GM10248 (cell line): ENCODE measurements at regions of chr2 and their contacts with region 1.

Region 1: DNA sequence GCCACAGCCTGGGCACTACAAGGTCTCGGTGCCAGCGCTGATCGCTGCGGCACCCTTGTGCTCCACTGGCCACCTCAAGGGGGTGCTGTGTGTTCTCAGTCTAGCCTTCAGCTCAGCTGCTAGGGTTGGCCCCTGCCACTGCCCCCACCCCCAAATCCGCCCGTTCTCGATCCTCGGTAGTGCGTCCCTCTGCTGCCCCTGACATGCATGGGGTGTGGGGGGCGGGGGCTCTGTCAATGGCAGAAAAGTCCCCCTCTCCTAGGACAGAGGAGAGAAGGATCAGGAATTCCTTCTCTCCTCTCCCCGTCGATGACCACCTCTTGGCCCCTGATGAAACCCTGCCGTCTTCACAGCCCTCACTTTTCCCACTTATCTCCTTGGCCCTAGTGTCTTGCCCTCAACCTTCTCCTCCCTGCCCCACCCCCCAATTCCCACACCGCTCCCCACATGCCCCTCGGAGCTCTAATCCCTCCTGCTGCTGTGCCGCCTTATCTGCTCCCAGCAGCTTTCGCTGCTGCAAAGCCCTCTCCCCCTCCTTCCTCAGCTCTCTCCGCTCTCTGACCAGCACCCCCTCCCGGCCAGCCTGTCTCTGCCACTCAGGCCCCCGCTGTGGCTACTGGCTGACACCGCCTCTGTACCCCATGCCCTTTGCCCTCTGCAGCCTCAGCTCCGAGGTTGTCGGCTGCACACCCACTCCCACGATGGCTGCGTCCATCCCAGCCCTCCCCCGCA is 4.3 kb upstream of the ASIC4 start:
- DNase-seq: peak; percentile 70
- CTCF ChIP-seq: peak; percentile 81

Region 2: DNA sequence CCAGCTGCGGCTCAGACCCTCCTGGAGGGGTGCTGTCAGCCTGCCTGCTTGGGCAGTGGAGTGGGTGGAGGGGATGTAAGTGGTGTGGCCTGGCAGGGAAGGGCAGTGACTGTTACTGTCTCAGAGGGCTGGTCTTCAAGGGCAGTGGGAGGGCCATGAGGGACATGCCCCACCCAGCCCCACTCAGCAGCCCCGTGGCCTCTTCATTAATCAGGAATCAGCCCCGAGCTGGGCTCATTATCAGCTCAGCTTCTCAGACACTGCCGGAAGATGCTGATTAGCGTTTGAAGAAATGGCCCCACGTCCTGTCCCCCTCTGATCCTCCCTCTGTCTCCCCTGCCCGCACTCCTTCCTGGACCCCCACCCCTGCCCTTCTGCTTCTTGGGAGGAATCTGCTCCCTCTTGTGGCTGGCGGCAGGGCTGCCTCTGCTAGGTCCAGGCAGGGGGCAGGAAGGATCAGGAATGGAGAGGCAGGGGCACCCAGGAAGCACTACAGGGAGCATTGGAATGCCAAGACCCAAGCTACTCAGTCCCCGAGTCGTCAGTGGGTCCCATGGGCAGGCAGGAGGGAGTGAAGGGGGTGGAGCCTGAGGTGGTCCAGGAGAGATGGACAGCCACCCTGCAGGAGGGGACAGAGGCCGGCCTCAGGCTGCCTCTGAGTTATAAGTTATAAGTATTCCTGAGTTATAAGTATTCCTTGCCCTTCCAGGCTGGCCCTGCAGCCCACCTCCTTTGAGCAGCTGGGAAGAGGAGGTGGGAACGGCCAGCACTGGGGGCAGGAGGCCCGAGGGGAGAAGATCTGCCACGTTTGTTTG is 11.3 kb after region 1 on chr2:
- CTCF ChIA-PET with region 1: interaction called, 80 read pairs
- POLR2A ChIA-PET with region 1: no interaction called
- DNase-seq: no peak
- CTCF ChIP-seq: peak; percentile 28

Region 3: GRCh38 chr2:220209751-220210150 is 699.8 kb after region 1 on chr2:
- CTCF ChIA-PET with region 1: no interaction called
- POLR2A ChIA-PET with region 1: no interaction called
- DNase-seq: no peak
- CTCF ChIP-seq: no peak